ENCODE measurements at regions of chr3 and their contacts with region 1.

Region 1: DNA sequence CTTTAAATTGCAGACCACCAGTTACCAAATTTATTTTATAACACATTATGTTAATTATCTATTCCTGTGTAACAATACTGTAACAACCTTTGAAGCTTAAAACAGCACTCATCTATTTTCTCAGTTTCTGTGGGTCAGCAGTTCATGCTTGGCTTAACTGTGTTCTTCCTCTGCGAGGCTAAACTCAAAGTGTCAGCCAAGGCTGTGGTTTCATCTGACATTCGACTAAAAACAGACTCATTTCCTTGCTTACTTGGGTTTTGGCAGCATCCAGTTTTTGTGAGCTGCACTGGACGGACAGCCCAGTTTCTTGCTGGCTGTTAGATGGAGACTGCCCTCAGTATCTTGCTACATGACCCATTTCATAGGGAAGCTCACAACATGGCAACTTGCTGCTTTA is 247.3 kb upstream of the KCNH8 start:
- DNase-seq: peak in 1 of 5 donors; percentile 7
- H3K4me3 ChIP-seq: no peak overlapping the region
- H3K27ac ChIP-seq: no peak overlapping the region
- H3K4me1 ChIP-seq: no peaks in the 10 kb centered on the region
- H3K27me3 ChIP-seq: no peaks in the 10 kb centered on the region
- CTCF ChIP-seq: no peak
- EP300 ChIP-seq: no peak
- POLR2A ChIP-seq: no peak

Region 2: GRCh38 chr3:18712713-18713576 is 188.0 kb before region 1 on chr3:
- intact Hi-C with region 1: loop called in 1 of 4 experiments (anchors 5 kb)
- DNase-seq: no peak
- H3K4me3 ChIP-seq: no peak overlapping the region
- H3K27ac ChIP-seq: no peak overlapping the region
- H3K4me1 ChIP-seq: no peaks in the 10 kb centered on the region
- H3K27me3 ChIP-seq: no peaks in the 10 kb centered on the region
- CTCF ChIP-seq: no peak
- EP300 ChIP-seq: no peak
- POLR2A ChIP-seq: no peak